Tibial artery (tissue), 4 donors: ENCODE measurements at regions of chr6 and their contacts with region 1.

Region 1: GRCh38 chr6:7846966-7847818 is 63.4 kb downstream of the TXNDC5 start:
- DNase-seq: no peak
- H3K4me3 ChIP-seq: no peak overlapping the region
- H3K27ac ChIP-seq: peak overlapping the region in 1 of 2 donors; percentile 41
- H3K4me1 ChIP-seq: peaks cover 0 to 19% (median 4%) of the 10 kb centered on the region in 4 donors
- H3K27me3 ChIP-seq: no peaks in the 10 kb centered on the region
- CTCF ChIP-seq: peak in 1 of 2 experiments; percentile 13

Region 2: GRCh38 chr6:7691675-7692452 is 155.3 kb before region 1 on chr6:
- intact Hi-C with region 1: loop called (anchors 5 kb)
- DNase-seq: no peak
- H3K4me3 ChIP-seq: no peak overlapping the region
- H3K27ac ChIP-seq: no peak overlapping the region
- H3K4me1 ChIP-seq: no peaks in the 10 kb centered on the region
- H3K27me3 ChIP-seq: peaks cover 0 to 6% of the 10 kb centered on the region in 2 donors
- CTCF ChIP-seq: no peak

Region 3: DNA sequence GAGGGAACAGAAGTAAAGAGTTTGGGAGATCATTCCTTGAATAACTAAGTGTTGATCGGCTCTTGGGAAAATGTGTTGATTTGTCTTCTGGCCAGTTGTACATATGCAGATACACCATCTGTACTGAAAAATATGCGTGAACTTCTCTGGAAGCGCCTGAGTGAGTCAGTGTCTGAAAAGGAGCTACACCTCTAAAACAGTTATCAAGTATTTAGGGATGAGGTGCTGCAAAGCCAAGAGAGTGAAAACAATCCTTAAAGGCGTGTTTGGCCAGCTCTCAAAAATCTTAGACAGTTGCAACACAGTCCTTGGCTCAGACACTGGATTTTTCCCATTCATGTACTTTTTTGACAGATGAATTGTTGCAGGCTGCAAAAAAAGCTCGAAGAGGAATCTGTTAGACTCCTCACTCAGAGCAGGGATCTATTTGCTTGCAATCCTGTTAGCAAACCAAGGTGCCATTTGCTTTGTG is 60.0 kb before region 1 on chr6:
- intact Hi-C with region 1: no loop called
- DNase-seq: no peak
- H3K4me3 ChIP-seq: no peak overlapping the region
- H3K27ac ChIP-seq: peak overlapping the region in 1 of 2 donors; percentile 63
- H3K4me1 ChIP-seq: peaks cover 0 to 34% (median 10%) of the 10 kb centered on the region in 4 donors
- H3K27me3 ChIP-seq: no peaks in the 10 kb centered on the region
- CTCF ChIP-seq: no peak